ENCODE measurements at regions of chr1 and their contacts with region 1.

Region 1: DNA sequence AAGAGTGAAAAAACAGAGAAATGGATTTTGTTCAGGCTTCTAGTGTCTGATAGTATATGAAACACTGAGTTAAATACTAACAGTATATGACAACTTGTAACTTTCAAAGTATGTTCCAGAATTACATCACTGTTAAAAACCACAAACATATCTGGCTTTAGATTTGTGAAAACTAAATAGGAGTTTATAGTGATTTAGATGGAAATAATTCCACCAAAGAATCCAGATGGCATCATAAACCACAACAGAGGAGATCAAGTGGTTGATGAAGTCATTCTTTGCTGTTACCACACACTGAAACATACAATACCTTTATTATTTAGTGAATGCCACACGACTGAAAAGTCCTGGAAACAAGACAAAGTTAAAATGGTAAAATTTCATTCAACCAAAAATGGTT is 37.2 kb downstream of the ALG14 start:
- DNase-seq: no peak
- ATAC-seq: no peak
- H3K4me3 ChIP-seq: no peak overlapping the region
- H3K27ac ChIP-seq: no peak overlapping the region
- H3K4me1 ChIP-seq: no peaks in the 10 kb centered on the region
- H3K27me3 ChIP-seq: no peaks in the 10 kb centered on the region
- CTCF ChIP-seq: no peak
- POLR2A ChIP-seq: no peak

Region 2: DNA sequence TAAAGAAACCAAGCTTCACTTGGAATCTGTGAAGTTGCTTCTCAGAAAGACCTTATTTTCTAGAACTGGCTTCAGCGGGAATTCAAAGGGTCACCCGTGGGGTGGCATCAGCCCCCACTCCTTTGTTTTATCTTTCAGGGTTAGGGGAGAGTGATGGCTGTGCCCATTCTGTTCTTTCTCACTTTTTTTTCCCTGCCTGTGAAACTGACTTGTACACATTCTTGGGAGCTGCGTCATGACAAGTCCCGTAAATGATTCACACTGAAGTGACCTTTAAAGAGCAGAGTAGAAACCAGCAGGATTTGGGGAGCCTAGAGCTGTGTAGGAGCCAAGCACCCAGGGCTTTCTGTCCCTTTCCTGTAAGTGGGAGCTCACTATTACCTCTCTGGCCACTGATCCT is 171.6 kb before region 1 on chr1:
- intact Hi-C with region 1: loop called in 1 of 2 experiments (anchors 10 kb)
- DNase-seq: no peak
- ATAC-seq: peak in 3 of 4 donors; percentile 53 to 77 (median 64)
- H3K4me3 ChIP-seq: no peak overlapping the region
- H3K27ac ChIP-seq: peak overlapping the region in 2 of 3 donors; percentile 47 to 58
- H3K4me1 ChIP-seq: no peaks in the 10 kb centered on the region
- H3K27me3 ChIP-seq: no peaks in the 10 kb centered on the region
- CTCF ChIP-seq: no peak
- POLR2A ChIP-seq: no peak

Measured in right lobe of liver (tissue), 6 donors.